Transverse colon (tissue), 4 donors: ENCODE measurements at regions of chr1 and their contacts with region 1.

Region 1: GRCh38 chr1:225378880-225379279 is 49.0 kb downstream of the LBR start:
- DNase-seq: no peak
- H3K4me3 ChIP-seq: no peak overlapping the region
- H3K27ac ChIP-seq: no peak overlapping the region
- H3K4me1 ChIP-seq: no peaks in the 10 kb centered on the region
- H3K27me3 ChIP-seq: no peaks in the 10 kb centered on the region
- CTCF ChIP-seq: no peak
- EP300 ChIP-seq: no peak
- POLR2A ChIP-seq: no peak

Region 2: DNA sequence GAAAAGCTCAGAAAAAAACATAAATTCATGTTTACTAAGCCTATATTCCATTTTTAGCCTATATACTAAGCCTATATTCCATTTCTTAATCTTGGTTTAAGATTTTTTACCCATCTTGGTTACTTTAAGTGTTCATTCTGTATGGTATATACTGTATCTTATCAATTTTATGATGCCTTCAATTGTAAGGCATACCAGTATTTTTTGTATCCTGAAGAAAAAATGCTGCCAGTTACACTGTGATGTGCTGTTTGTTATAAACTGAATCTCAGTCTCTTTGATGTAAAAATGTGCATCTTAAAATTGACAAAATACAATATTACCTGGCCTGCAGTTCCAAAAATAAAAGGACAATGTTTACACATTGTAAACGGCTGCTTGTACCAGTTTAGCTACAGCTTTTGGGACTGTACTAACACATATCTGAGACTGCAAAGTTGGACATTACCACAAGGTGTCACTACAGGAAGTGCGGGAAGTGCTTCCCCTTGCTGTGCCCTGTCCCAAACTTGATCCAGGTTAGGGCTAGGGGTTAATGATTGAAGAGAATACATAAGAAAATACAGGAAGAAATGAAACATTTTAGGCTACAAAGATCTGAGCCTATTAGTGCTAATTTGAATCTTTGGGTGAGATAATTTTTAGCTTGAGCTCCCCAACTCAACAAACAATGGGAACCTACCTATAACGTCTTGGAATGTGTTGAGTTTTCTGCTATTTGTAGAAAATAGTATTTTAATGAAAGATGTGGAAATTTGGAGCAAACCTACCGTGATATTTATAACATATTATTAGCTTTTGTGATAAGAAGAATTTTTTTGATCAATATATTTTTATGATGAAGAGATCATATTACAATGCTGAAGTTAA is 59.9 kb before region 1 on chr1:
- in situ Hi-C with region 1: no loop called
- intact Hi-C with region 1: no loop called
- DNase-seq: peak; percentile 13
- H3K4me3 ChIP-seq: no peak overlapping the region
- H3K27ac ChIP-seq: no peak overlapping the region
- H3K4me1 ChIP-seq: peaks cover 0 to 6% (median 0%) of the 10 kb centered on the region in 4 donors
- H3K27me3 ChIP-seq: no peaks in the 10 kb centered on the region
- CTCF ChIP-seq: peak; percentile 56 to 65 (median 61)
- EP300 ChIP-seq: no peak
- POLR2A ChIP-seq: no peak

Region 3: DNA sequence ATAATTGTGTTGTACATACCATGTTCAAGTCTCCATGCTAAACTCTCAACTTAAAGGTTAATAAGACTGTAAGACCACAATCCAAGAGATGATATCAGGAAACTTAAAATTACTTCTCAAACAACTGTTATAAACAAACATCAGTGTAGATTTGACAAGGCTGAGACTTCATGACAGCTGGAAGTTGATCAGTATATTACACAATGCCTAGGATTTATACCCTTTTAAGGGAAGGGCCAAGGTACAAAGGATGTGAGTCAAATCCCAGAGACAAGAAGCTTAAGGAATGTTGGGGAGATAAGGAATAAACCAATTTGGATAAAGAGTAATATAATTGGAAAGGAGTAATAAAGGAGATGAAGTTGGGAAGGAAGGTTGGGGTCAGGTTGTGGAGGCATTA is 49.8 kb before region 1 on chr1:
- in situ Hi-C with region 1: no loop called
- intact Hi-C with region 1: loop called (anchors 2 kb)
- DNase-seq: no peak
- H3K4me3 ChIP-seq: no peak overlapping the region
- H3K27ac ChIP-seq: no peak overlapping the region
- H3K4me1 ChIP-seq: no peaks in the 10 kb centered on the region
- H3K27me3 ChIP-seq: no peaks in the 10 kb centered on the region
- CTCF ChIP-seq: no peak
- EP300 ChIP-seq: no peak
- POLR2A ChIP-seq: no peak